Activated naive CD4-positive, alpha-beta T cell treated with anti-CD3 and anti-CD28 coated beads for 36 hours (primary cell): ENCODE measurements at regions of chr2 and their contacts with region 1.

Region 1: DNA sequence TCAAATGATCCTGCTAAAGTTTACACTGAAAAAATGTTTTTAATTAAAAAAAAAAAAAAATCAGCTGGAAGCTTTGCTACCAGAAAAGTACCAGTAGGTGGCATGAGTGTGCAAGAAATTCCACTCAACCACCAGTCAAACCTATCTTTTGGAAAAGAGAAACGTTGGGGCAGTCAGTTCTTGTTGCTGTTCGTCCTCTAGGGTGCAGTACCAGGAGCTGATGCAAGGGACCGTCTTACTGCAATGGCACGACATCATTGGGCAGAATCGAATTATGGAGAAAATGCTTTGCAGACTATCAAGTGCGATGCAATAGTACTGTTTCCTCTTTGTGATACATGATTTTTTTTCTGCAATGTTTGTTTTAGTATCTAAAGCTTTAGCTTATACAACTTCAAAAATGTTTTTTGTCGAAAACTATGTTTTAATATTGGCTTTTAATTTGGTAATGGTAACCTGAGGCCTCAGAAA is 18.3 kb downstream of the YPEL5 start:
- DNase-seq: peak; percentile 77
- H3K4me3 Mint-ChIP-seq: no peak overlapping the region
- H3K27ac Mint-ChIP-seq: no peak overlapping the region
- H3K4me1 Mint-ChIP-seq: peaks cover 6% of the 10 kb centered on the region
- H3K27me3 Mint-ChIP-seq: no peaks in the 10 kb centered on the region

Region 2: DNA sequence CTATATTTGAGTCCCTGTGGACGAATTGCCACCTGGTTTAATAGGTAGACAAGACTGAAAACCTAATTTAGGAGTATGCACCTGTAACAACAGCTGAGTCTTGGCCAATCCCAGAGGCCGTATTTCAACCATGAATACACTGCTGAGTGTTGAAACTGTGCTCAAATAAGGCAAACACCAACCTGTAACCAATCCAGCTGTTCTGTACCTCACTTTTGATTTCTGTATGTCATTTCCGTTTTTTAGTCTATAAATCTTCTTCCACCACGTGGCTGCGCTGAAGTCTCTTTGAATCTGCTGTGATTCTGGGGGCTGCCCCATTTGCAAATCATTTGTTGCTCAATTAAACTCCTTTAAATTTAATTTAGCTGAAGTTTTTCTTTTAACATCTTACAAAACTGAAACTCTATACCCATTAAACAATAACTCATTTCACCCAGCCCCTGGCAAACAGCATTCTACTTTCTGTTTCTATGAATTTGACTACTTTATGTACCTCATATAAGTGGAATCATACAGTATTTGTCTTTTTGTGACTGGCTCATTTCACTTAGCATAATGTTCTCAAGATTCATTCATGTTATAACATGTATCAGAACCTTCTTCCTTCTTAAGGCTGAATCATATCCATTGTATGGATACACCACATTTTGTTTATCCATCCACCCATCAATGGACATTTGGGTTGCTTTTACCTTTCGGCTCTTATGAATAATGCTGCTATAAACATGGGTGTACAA is 25.8 kb before region 1 on chr2:
- CTCF ChIA-PET with region 1: interaction called, 20 read pairs
- intact Hi-C with region 1: loop called (anchors 1 kb)
- DNase-seq: peak; percentile 82
- H3K4me3 Mint-ChIP-seq: peak overlapping the region; percentile 51
- H3K27ac Mint-ChIP-seq: peak overlapping the region; percentile 79
- H3K4me1 Mint-ChIP-seq: peaks cover 27% of the 10 kb centered on the region
- H3K27me3 Mint-ChIP-seq: no peaks in the 10 kb centered on the region

Region 3: DNA sequence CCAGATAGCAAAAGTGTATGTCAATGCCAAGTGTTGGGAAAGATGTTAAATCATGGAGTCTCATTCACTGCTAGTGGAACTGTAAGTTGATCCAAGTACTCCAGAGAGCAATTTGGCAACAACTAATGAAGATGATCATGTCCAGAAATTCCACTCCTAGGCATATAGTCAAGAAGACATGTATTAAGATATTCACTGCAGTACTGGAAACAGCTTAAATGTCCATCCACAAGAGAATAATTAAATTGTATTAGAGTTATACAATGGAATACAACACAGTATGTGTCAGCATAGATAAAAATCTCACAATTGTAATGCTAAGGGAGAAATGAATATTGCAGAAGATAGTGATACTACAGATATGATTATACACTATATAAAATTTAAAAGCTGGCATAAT is 51.1 kb after region 1 on chr2:
- CTCF ChIA-PET with region 1: interaction called, 12 read pairs
- intact Hi-C with region 1: no loop called
- DNase-seq: no peak
- H3K4me3 Mint-ChIP-seq: no peak overlapping the region
- H3K27ac Mint-ChIP-seq: no peak overlapping the region
- H3K4me1 Mint-ChIP-seq: peaks cover 12% of the 10 kb centered on the region
- H3K27me3 Mint-ChIP-seq: no peaks in the 10 kb centered on the region

Region 4: DNA sequence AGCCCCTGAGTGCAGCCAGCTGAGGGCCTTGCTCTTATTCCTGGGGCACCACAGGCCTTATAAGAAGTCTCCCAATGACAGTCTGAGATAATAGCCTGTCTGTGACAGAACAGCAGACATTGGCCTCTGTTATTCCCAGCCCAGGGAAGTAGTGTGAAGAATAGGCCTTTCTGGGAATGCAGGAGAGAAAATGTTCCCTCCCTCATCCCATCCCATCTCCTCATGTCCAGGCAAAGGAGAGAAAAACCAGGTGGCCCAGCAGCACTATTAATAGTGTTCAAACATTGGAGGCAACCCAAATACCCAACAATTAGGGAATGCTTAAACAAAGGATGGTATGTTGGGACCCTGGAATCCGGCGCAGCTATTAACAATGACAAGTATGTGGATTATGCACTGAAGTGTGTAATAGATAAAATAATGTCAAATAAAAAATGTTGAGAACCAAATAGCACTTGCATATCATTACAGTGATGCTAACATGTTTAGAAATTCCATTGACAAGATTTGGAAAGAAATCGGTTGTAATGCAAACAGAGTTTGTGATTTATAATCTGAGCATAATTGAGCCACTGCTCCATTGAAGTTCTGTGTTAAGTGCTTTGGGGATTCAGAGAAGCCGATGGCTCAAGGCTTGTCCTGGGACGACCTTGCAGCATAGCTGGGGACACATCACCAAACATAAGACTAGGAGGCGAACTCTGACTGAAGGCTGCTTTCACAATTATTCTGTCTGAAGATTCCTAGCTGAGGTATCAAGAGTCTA is 135.6 kb after region 1 on chr2:
- CTCF ChIA-PET with region 1: interaction called, 14 read pairs
- intact Hi-C with region 1: no loop called
- DNase-seq: no peak
- H3K4me3 Mint-ChIP-seq: no peak overlapping the region
- H3K27ac Mint-ChIP-seq: no peak overlapping the region
- H3K4me1 Mint-ChIP-seq: peaks cover 24% of the 10 kb centered on the region
- H3K27me3 Mint-ChIP-seq: no peaks in the 10 kb centered on the region

Region 5: GRCh38 chr2:30691948-30692828 is 527.1 kb after region 1 on chr2:
- CTCF ChIA-PET with region 1: interaction called, 17 read pairs
- intact Hi-C with region 1: no loop called
- DNase-seq: peak; percentile 22
- H3K4me3 Mint-ChIP-seq: no peak overlapping the region
- H3K27ac Mint-ChIP-seq: no peak overlapping the region
- H3K4me1 Mint-ChIP-seq: no peaks in the 10 kb centered on the region
- H3K27me3 Mint-ChIP-seq: no peaks in the 10 kb centered on the region

Region 6: GRCh38 chr2:31333527-31334183 is 1168.6 kb after region 1 on chr2:
- CTCF ChIA-PET with region 1: interaction called, 3 read pairs
- intact Hi-C with region 1: loop called (anchors 5 kb)
- DNase-seq: peak; percentile 89
- H3K4me3 Mint-ChIP-seq: no peak overlapping the region
- H3K27ac Mint-ChIP-seq: no peak overlapping the region
- H3K4me1 Mint-ChIP-seq: no peaks in the 10 kb centered on the region
- H3K27me3 Mint-ChIP-seq: no peaks in the 10 kb centered on the region